ENCODE measurements at regions of chr1 and their contacts with region 1.

Region 1: DNA sequence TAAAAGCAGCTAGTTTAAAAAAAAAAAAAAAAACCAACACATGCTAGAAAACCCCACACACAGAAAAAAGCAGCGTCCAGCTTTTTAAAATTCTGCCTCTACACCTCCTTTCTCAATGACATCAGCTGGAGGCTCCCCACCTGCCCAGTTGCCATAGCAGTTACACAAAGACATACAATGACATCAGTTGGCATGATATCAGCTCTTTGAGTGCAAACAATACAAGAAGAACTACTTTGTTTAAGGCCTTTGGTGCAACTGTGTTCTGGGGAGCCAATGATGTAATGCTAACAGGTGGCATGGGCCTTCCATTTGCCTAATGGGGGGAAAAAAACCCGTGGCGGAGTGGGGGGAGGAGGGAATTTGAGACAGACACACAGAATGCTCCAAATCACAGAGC is 32.9 kb downstream of the DUSP10 start:
- DNase-seq: peak; percentile 20
- ATAC-seq: peak; percentile 32
- H3K4me3 Mint-ChIP-seq: peak overlapping the region; percentile 37
- H3K27ac Mint-ChIP-seq: peak overlapping the region; percentile 82
- H3K4me1 Mint-ChIP-seq: peaks cover 60% of the 10 kb centered on the region
- H3K27me3 Mint-ChIP-seq: no peaks in the 10 kb centered on the region
- CTCF ChIP-seq: no peak

Region 2: DNA sequence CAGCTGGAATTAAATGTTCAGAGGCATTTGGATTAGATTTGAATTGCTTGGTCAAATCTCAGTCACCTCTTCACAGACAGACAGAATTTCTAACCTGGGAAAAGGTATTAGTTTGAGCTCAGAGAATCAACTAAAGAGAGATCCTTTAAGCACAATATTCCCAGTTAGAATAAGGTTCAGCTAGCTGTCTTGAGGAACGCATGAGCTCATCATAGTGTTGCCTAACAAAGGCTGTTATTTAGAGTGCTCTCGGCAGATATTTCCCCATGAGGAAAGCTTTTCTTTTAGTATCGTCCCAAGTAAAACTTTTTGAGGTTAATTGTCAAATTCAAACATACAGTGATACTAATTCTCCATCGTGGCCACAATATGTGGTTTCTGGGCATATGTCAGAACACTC is 559.9 kb before region 1 on chr1:
- CTCF ChIA-PET with region 1: no interaction called
- POLR2A ChIA-PET with region 1: interaction called, 10 read pairs
- intact Hi-C with region 1: no loop called
- DNase-seq: no peak
- ATAC-seq: no peak
- H3K4me3 Mint-ChIP-seq: no peak overlapping the region
- H3K27ac Mint-ChIP-seq: no peak overlapping the region
- H3K4me1 Mint-ChIP-seq: no peaks in the 10 kb centered on the region
- H3K27me3 Mint-ChIP-seq: no peaks in the 10 kb centered on the region
- CTCF ChIP-seq: no peak

Region 3: DNA sequence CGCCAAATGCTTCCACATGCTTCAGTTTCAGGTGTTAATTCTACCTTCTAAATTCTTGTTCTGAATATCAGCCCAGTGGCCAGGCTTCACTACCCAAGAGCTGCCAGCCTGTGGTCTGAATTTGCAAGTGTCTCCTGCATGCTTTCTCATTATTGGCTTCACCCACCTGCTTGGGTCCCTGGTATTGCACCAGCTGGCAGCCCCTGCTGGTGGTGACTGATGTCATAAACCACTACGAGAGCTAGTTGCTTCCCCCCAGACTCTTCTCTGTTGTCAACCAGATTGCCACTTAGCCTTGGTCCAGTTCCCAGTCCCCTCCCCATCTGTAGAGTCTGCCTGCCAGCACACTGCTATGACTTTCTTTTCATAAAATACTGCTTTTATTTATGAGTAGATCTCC is 230.6 kb after region 1 on chr1:
- CTCF ChIA-PET with region 1: no interaction called
- POLR2A ChIA-PET with region 1: no interaction called
- intact Hi-C with region 1: loop called (anchors 2 kb)
- DNase-seq: peak; percentile 49
- ATAC-seq: peak; percentile 95
- H3K4me3 Mint-ChIP-seq: peak overlapping the region; percentile 66
- H3K27ac Mint-ChIP-seq: peak overlapping the region; percentile 79
- H3K4me1 Mint-ChIP-seq: peaks cover 41% of the 10 kb centered on the region
- H3K27me3 Mint-ChIP-seq: no peaks in the 10 kb centered on the region
- CTCF ChIP-seq: no peak